Right ventricle myocardium inferior (tissue), 1 donor: ENCODE measurements at regions of chr15 and their contacts with region 1.

Region 1: GRCh38 chr15:33700695-33701304 is 267.5 kb upstream of the CHRM5 start:
- DNase-seq: no peak
- ATAC-seq: peak; percentile 74

Region 2: GRCh38 chr15:32994810-32995424 is 705.9 kb before region 1 on chr15:
- intact Hi-C with region 1: no loop called
- DNase-seq: no peak
- ATAC-seq: no peak

Region 3: GRCh38 chr15:33292717-33293307 is 408.0 kb before region 1 on chr15:
- intact Hi-C with region 1: loop called (anchors 1 kb)
- DNase-seq: no peak
- ATAC-seq: no peak

Region 4: GRCh38 chr15:33735637-33736247 is 34.9 kb after region 1 on chr15:
- intact Hi-C with region 1: no loop called
- DNase-seq: no peak
- ATAC-seq: no peak